Activated CD4-positive, alpha-beta memory T cell treated with anti-CD3 and anti-CD28 coated beads for 36 hours (primary cell): ENCODE measurements at regions of chr2 and their contacts with region 1.

Region 1: DNA sequence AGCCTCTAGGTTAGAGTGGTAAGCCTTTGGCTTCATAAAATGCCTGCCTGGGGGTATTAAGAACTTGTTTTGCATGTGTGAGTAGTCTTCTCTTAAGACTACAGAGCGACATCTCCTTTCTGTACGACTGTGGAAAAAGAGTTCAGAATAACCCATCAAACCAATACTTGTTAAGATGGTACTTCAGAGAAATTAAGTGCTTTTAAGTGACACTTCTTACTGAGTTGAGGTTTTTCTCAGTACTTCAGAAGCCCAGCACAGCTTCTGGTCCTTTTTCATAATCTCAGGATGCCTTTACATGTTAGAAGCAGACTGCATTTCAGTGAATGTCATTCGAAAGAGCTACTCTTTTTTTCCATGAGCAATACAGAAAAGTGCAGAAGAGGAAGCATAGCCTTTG is 10.8 kb downstream of the XRCC5 start:
- DNase-seq: no peak
- H3K4me3 Mint-ChIP-seq: peak overlapping the region; percentile 9
- H3K27ac Mint-ChIP-seq: peak overlapping the region; percentile 91
- H3K4me1 Mint-ChIP-seq: peaks cover 81% of the 10 kb centered on the region
- H3K27me3 Mint-ChIP-seq: no peaks in the 10 kb centered on the region

Region 2: GRCh38 chr2:216101109-216101508 is 18.9 kb before region 1 on chr2:
- CTCF ChIA-PET with region 1: no interaction called
- POLR2A ChIA-PET with region 1: no interaction called
- intact Hi-C with region 1: no loop called
- DNase-seq: no peak
- H3K4me3 Mint-ChIP-seq: no peak overlapping the region
- H3K27ac Mint-ChIP-seq: no peak overlapping the region
- H3K4me1 Mint-ChIP-seq: no peaks in the 10 kb centered on the region
- H3K27me3 Mint-ChIP-seq: no peaks in the 10 kb centered on the region

Region 3: DNA sequence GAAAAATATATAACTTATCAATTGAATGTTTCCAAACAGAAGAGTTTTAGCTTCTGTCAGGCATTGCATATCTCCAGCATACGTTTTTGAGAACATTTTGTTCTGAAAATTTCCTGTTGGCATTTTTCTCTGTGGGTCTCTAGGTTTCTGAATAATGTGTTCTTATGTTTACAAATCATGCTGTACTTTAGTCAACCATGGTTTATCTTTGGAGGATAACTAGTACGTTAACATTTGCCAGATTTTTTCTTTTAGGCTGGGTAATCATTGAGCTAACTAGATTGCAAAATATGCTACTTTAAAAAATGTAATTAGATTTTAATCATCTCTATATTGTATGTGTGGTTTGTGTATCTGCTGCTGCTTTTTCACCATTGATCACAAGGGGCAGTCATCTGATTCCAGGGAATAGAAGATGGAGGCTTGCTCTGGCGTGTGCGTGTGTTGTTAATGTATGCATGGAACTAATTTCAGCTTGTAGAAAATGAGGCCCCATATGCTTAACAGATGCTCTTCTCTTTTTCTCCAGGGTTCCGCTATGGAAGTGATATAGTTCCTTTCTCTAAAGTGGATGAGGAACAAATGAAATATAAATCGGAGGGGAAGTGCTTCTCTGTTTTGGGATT is 10.5 kb after region 1 on chr2:
- CTCF ChIA-PET with region 1: interaction called, 7 read pairs
- POLR2A ChIA-PET with region 1: interaction called, 4 read pairs
- intact Hi-C with region 1: loop called (anchors 1 kb)
- DNase-seq: no peak
- H3K4me3 Mint-ChIP-seq: no peak overlapping the region
- H3K27ac Mint-ChIP-seq: no peak overlapping the region
- H3K4me1 Mint-ChIP-seq: peaks cover 75% of the 10 kb centered on the region
- H3K27me3 Mint-ChIP-seq: no peaks in the 10 kb centered on the region